ENCODE measurements at regions of chr6 and their contacts with region 1.

Region 1: DNA sequence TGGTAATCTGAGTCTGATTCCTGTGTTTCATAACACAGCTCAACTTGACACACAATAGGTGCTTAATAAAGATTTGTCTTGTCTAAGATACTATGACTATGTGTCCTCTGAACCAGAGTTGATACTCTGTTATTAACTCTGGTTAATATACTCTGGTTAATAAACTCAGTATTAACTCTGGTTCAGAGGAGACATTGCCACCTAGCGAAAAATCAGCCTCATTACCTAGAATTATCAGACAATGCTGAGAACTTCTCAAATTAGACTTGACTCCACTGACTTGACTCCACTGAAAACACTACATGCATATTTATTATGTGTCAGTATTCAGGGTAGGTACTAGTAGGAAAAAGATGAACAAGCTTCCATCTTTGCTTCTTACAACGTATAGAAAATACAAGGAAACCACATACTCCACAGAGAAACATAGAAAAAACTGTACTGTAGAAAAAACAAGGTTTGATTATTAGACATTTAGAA is 73.9 kb downstream of the AHI1 start:
- DNase-seq: no peak
- ATAC-seq: no peak
- H3K4me3 ChIP-seq: no peak overlapping the region
- H3K27ac ChIP-seq: no peak overlapping the region
- H3K4me1 ChIP-seq: no peaks in the 10 kb centered on the region
- H3K27me3 ChIP-seq: no peaks in the 10 kb centered on the region
- CTCF ChIP-seq: peak in 2 of 5 experiments; percentile 34 to 42
- POLR2A ChIP-seq: no peak

Region 2: GRCh38 chr6:135145063-135145800 is 278.5 kb before region 1 on chr6:
- in situ Hi-C with region 1: loop called in 1 of 4 experiments (anchors 10 kb)
- intact Hi-C with region 1: no loop called
- DNase-seq: no peak
- ATAC-seq: no peak
- H3K4me3 ChIP-seq: no peak overlapping the region
- H3K27ac ChIP-seq: no peak overlapping the region
- H3K4me1 ChIP-seq: no peaks in the 10 kb centered on the region
- H3K27me3 ChIP-seq: no peaks in the 10 kb centered on the region
- CTCF ChIP-seq: peak in 4 of 5 experiments; percentile 12 to 36 (median 28)
- POLR2A ChIP-seq: no peak